ENCODE measurements at regions of chr9 and their contacts with region 1.

Region 1: GRCh38 chr9:71683598-71684235 is 84.6 kb downstream of the CEMIP2 start:
- DNase-seq: peak; percentile 70 to 82 (median 73)
- H3K4me3 ChIP-seq: no peak overlapping the region
- H3K4me3 Mint-ChIP-seq: no peak overlapping the region
- H3K27ac ChIP-seq: no peak overlapping the region
- H3K27ac Mint-ChIP-seq: peak overlapping the region; percentile 10 to 82 (median 52)
- H3K4me1 ChIP-seq: peaks cover 15 to 18% of the 10 kb centered on the region in 2 donors
- H3K4me1 Mint-ChIP-seq: peaks cover 36% of the 10 kb centered on the region
- H3K27me3 ChIP-seq: no peaks in the 10 kb centered on the region
- H3K27me3 Mint-ChIP-seq: peaks cover 0 to 3% (median 0%) of the 10 kb centered on the region in 3 donors
- CTCF ChIP-seq: peak; percentile 67

Region 2: GRCh38 chr9:71748280-71748743 is 64.6 kb after region 1 on chr9:
- intact Hi-C with region 1: loop called in 1 of 2 experiments (anchors 10 kb)
- DNase-seq: peak in 2 of 3 donors; percentile 52 to 57
- H3K4me3 ChIP-seq: peak overlapping the region in 1 of 3 experiments; percentile 38
- H3K4me3 Mint-ChIP-seq: peak overlapping the region in 1 of 2 donors; percentile 54
- H3K27ac ChIP-seq: peak overlapping the region in 1 of 2 donors; percentile 61
- H3K27ac Mint-ChIP-seq: peak overlapping the region; percentile 82 to 94 (median 91)
- H3K4me1 ChIP-seq: peaks cover 67 to 79% of the 10 kb centered on the region in 2 donors
- H3K4me1 Mint-ChIP-seq: peaks cover 70% of the 10 kb centered on the region
- H3K27me3 ChIP-seq: no peaks in the 10 kb centered on the region
- H3K27me3 Mint-ChIP-seq: peaks cover 0 to 3% (median 0%) of the 10 kb centered on the region in 3 donors
- CTCF ChIP-seq: no peak

Region 3: GRCh38 chr9:71806901-71807307 is 123.2 kb after region 1 on chr9:
- intact Hi-C with region 1: no loop called
- DNase-seq: peak; percentile 34 to 59 (median 47)
- H3K4me3 ChIP-seq: no peak overlapping the region
- H3K4me3 Mint-ChIP-seq: no peak overlapping the region
- H3K27ac ChIP-seq: no peak overlapping the region
- H3K27ac Mint-ChIP-seq: no peak overlapping the region
- H3K4me1 ChIP-seq: no peaks in the 10 kb centered on the region
- H3K4me1 Mint-ChIP-seq: no peaks in the 10 kb centered on the region
- H3K27me3 ChIP-seq: no peaks in the 10 kb centered on the region
- H3K27me3 Mint-ChIP-seq: peaks cover 2 to 4% (median 2%) of the 10 kb centered on the region in 3 donors
- CTCF ChIP-seq: peak; percentile 92